WTC11 (cell line): ENCODE measurements at regions of chr1 and their contacts with region 1.

Region 1: GRCh38 chr1:225304996-225305395 is 122.8 kb downstream of the LBR start:
- DNase-seq: no peak
- ATAC-seq: no peak
- H3K4me3 Mint-ChIP-seq: no peak overlapping the region
- H3K27ac Mint-ChIP-seq: no peak overlapping the region
- H3K4me1 Mint-ChIP-seq: no peaks in the 10 kb centered on the region
- H3K27me3 Mint-ChIP-seq: no peaks in the 10 kb centered on the region
- CTCF ChIP-seq: no peak

Region 2: DNA sequence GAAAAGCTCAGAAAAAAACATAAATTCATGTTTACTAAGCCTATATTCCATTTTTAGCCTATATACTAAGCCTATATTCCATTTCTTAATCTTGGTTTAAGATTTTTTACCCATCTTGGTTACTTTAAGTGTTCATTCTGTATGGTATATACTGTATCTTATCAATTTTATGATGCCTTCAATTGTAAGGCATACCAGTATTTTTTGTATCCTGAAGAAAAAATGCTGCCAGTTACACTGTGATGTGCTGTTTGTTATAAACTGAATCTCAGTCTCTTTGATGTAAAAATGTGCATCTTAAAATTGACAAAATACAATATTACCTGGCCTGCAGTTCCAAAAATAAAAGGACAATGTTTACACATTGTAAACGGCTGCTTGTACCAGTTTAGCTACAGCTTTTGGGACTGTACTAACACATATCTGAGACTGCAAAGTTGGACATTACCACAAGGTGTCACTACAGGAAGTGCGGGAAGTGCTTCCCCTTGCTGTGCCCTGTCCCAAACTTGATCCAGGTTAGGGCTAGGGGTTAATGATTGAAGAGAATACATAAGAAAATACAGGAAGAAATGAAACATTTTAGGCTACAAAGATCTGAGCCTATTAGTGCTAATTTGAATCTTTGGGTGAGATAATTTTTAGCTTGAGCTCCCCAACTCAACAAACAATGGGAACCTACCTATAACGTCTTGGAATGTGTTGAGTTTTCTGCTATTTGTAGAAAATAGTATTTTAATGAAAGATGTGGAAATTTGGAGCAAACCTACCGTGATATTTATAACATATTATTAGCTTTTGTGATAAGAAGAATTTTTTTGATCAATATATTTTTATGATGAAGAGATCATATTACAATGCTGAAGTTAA is 13.9 kb after region 1 on chr1:
- CTCF ChIA-PET with region 1: interaction called, 20 read pairs
- POLR2A ChIA-PET with region 1: no interaction called
- DNase-seq: no peak
- ATAC-seq: peak; percentile 97
- H3K4me3 Mint-ChIP-seq: no peak overlapping the region
- H3K27ac Mint-ChIP-seq: no peak overlapping the region
- H3K4me1 Mint-ChIP-seq: 0 out of 2 replicates have a peak, but pooled peaks cover 7% of the 10 kb centered on the region
- H3K27me3 Mint-ChIP-seq: peaks cover 6% of the 10 kb centered on the region; the same call in 1 of the 2 replicates
- CTCF ChIP-seq: peak; percentile 36